Endothelial cell of umbilical vein (primary cell): ENCODE measurements at regions of chr17 and their contacts with region 1.

Region 1: GRCh38 chr17:76501018-76501826 is at the start of gene RHBDF2:
- DNase-seq: peak; percentile 76
- H3K4me3 ChIP-seq: peak within 1 kb of the TSS; percentile 38 to 72 (median 56)
- H3K27ac ChIP-seq: peak within 1 kb of the TSS; percentile 58
- H3K4me1 ChIP-seq: peaks cover 36% of the 10 kb centered on the region
- H3K27me3 ChIP-seq: no peaks in the 10 kb centered on the region
- CTCF ChIP-seq: no peak
- POLR2A ChIP-seq: peak; percentile 83
- total RNA-seq, gene RHBDF2: 38.5 and 42.6 TPM in 2 replicates

Region 2: GRCh38 chr17:76314392-76315227 is 186.6 kb before region 1 on chr17:
- CTCF ChIA-PET with region 1: no interaction called
- POLR2A ChIA-PET with region 1: no interaction called
- dilution Hi-C with region 1: no loop called
- intact Hi-C with region 1: loop called (anchors 10 kb)
- DNase-seq: peak; percentile 88
- H3K4me3 ChIP-seq: peak overlapping the region in 1 of 3 experiments; percentile 23
- H3K27ac ChIP-seq: peak overlapping the region; percentile 71
- H3K4me1 ChIP-seq: peaks cover 30% of the 10 kb centered on the region
- H3K27me3 ChIP-seq: no peaks in the 10 kb centered on the region
- CTCF ChIP-seq: no peak
- POLR2A ChIP-seq: no peak

Region 3: GRCh38 chr17:76467366-76467765 is 33.9 kb before region 1 on chr17 and contains the start of gene AANAT:
- CTCF ChIA-PET with region 1: interaction called, 110 read pairs
- POLR2A ChIA-PET with region 1: interaction called, 6 read pairs
- dilution Hi-C with region 1: no loop called
- intact Hi-C with region 1: loop called (anchors 1 kb)
- DNase-seq: no peak
- H3K4me3 ChIP-seq: no peak within 1 kb of the TSS
- H3K27ac ChIP-seq: no peak within 1 kb of the TSS
- H3K4me1 ChIP-seq: no peaks in the 10 kb centered on the region
- H3K27me3 ChIP-seq: no peaks in the 10 kb centered on the region
- CTCF ChIP-seq: no peak
- POLR2A ChIP-seq: no peak
- total RNA-seq, gene AANAT: not detected in 2 replicates

Region 4: GRCh38 chr17:76481071-76481655 is 20.1 kb before region 1 on chr17:
- CTCF ChIA-PET with region 1: interaction called, 4 read pairs
- POLR2A ChIA-PET with region 1: interaction called, 3 read pairs
- dilution Hi-C with region 1: no loop called
- intact Hi-C with region 1: loop called (anchors 1 kb)
- DNase-seq: no peak
- H3K4me3 ChIP-seq: no peak overlapping the region
- H3K27ac ChIP-seq: no peak overlapping the region
- H3K4me1 ChIP-seq: peaks cover 15% of the 10 kb centered on the region
- H3K27me3 ChIP-seq: no peaks in the 10 kb centered on the region
- CTCF ChIP-seq: no peak
- POLR2A ChIP-seq: no peak